ENCODE measurements at regions of chr20 and their contacts with region 1.

Region 1: GRCh38 chr20:32779500-32780211 is 17.5 kb downstream of the DNMT3B start:
- DNase-seq: no peak
- ATAC-seq: no peak
- H3K4me3 Mint-ChIP-seq: no peak overlapping the region
- H3K27ac Mint-ChIP-seq: no peak overlapping the region
- H3K4me1 Mint-ChIP-seq: peaks cover 4% of the 10 kb centered on the region
- H3K27me3 Mint-ChIP-seq: no peaks in the 10 kb centered on the region

Region 2: DNA sequence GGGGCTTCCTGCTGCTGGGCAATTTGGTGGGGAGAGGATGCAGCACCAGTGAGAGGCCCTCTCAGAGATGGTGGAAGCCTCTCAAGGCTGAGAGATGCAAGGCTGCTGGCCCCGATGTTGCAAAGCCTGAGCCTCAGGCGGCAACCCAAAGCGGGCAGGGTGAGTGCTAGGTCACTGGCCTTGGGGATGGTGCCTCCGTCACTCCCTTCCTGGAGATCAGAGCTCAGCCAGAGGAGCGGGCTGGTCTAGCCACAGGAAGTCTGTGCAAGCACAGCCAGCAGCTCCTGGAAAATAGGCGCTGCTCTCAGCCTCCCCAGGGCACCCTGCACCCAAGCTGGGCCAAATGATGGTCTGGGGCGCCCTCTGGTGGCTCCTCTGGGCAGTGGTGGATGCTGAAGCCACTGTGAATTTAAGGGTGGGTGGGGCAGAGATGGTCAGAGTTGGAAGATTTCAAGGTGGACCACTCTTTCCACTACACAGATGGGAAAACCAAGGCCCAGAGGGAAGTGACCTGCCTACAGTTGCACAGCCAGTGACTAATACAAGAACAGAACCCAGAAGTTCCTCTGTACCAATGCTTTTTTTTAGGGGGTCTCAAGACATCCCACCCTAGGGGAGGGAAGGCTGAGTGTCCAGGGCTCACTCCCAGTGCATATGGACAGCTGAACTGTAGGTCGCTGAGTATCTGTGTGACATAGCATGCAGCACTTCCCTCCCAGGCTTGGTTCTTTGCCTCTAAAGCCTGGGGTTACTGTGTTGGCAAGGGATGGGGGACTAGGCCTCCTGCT is 126.7 kb before region 1 on chr20:
- CTCF ChIA-PET with region 1: interaction called, 11 read pairs
- DNase-seq: peak; percentile 89
- ATAC-seq: peak; percentile 99
- H3K4me3 Mint-ChIP-seq: no peak overlapping the region
- H3K27ac Mint-ChIP-seq: no peak overlapping the region
- H3K4me1 Mint-ChIP-seq: peaks cover 11% of the 10 kb centered on the region
- H3K27me3 Mint-ChIP-seq: no peaks in the 10 kb centered on the region

Region 3: DNA sequence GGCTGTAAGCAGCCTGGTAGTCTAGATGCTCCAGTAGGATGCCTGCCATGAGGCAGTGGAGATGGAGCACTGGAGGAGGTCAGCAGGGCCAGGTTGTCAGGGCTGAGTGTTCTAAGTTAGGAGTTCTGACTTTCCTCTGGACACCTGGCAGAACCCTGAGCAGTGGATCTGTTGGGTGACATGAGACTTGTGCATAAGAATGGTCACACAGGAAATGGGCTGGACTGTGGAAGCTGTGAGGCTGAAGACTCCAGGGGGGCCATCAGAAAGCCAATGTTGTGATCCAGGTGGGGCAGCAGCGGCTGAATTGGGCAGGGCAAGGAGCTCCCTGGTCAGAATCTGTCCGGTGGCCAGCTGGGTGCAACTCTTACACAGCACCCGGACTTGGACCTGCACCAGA is 82.0 kb before region 1 on chr20:
- CTCF ChIA-PET with region 1: interaction called, 10 read pairs
- DNase-seq: no peak
- ATAC-seq: no peak
- H3K4me3 Mint-ChIP-seq: no peak overlapping the region
- H3K27ac Mint-ChIP-seq: no peak overlapping the region
- H3K4me1 Mint-ChIP-seq: no peaks in the 10 kb centered on the region
- H3K27me3 Mint-ChIP-seq: no peaks in the 10 kb centered on the region

Region 4: DNA sequence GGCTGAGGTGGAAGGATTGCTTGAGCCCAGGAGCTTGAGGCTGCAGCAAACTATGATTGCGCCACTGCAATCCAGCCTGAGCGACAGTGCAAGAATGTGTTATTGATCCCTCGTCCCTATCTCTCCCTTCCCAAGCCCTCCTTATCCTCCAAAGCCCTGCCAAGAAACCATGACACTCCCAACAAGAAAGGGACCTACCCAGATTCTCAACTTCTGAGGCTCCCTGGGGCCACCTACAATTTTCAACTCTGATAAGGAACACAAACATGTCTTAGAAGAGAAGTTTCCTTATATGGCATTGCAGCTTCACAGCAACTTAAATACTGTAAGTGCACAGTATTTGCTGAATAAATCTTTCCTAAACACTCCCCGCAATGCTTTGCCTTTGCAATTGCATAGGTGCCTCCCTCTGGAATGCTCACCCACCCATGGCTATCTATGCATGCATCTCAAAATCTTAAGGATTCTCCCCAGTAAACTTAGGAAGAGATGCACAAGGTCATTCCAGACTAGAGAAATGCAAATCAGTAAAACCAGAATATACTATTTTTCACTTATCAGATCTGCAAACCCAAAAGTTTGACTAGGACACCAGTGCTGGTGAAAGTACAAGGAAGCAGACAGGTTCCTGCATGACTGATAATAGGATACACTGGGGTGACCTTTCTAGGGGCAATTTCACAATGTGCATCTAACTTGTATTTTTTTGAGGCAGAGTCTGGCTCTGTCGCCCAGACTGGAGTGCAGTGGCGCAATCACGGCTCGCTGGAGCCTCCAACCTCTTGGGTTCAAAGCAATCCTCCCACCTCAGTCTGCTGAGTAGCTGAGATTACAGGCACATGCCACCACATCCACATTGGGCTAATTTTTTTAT is 48.0 kb before region 1 on chr20:
- CTCF ChIA-PET with region 1: interaction called, 34 read pairs
- DNase-seq: no peak
- ATAC-seq: no peak
- H3K4me3 Mint-ChIP-seq: no peak overlapping the region
- H3K27ac Mint-ChIP-seq: no peak overlapping the region
- H3K4me1 Mint-ChIP-seq: peaks cover 17% of the 10 kb centered on the region
- H3K27me3 Mint-ChIP-seq: no peaks in the 10 kb centered on the region

Region 5: DNA sequence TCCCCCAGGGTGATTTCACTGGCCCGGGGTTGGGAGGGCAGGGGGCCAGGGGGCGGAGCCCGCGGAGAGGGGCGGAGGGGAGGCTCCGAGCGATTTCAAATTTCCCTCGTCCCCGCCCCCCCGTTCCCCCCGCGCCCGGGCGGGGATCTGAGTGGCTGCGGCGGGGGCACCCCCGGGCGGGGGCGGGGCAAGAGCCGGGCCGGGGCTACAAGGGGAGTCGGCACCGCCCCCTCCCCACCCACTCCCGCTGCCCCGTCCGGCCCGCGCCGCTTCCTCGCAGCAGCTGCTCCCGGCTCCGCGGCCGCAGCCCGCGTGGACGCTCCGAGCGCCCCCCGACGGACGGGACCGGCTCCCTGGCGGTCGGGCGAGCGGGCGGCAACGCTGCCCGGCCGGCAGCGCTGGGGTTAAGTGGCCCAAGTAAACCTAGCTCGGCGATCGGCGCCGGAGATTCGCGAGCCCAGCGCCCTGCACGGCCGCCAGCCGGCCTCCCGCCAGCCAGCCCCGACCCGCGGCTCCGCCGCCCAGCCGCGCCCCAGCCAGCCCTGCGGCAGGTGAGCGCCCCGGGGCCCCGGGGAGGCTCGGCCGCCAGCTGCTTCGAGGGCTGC is 17.4 kb before region 1 on chr20 and contains the start of gene DNMT3B:
- CTCF ChIA-PET with region 1: interaction called, 37 read pairs
- DNase-seq: peak; percentile 83
- ATAC-seq: peak; percentile 86
- H3K4me3 Mint-ChIP-seq: peak within 1 kb of the TSS; percentile 75
- H3K27ac Mint-ChIP-seq: peak within 1 kb of the TSS; percentile 66
- H3K4me1 Mint-ChIP-seq: peaks cover 18% of the 10 kb centered on the region
- H3K27me3 Mint-ChIP-seq: peaks cover 9% of the 10 kb centered on the region
- total RNA-seq, gene DNMT3B: 3.3 to 4.7 TPM

Region 6: DNA sequence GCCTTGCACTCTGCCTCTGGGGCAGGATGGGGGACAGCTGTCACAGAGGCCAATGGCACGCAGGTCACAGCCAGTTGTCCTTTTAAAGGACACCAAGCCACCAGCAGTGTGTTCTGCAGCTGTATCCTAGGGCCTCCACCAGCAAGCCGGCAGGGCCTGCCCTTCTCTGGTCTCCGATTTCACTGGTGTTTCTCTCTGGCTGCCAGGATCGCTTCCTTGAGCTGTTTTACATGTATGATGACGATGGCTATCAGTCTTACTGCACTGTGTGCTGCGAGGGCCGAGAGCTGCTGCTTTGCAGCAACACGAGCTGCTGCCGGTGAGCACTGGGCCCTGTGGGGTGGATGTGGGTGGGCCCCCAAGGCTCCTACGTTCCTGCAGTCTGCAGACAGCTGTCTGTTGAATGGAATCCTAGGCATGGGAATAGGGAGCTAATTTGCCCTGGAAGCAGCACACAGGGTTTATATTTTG is 17.4 kb after region 1 on chr20:
- CTCF ChIA-PET with region 1: interaction called, 26 read pairs
- DNase-seq: no peak
- ATAC-seq: no peak
- H3K4me3 Mint-ChIP-seq: no peak overlapping the region
- H3K27ac Mint-ChIP-seq: no peak overlapping the region
- H3K4me1 Mint-ChIP-seq: peaks cover 23% of the 10 kb centered on the region
- H3K27me3 Mint-ChIP-seq: no peaks in the 10 kb centered on the region

Measured in activated CD8-positive, alpha-beta memory T cell treated with anti-CD3 and anti-CD28 coated beads, Interleukin-2, amount 10 ng/mL, durations not matched to agents 7 days and 5 days (primary cell).